Activated CD8-positive, alpha-beta memory T cell treated with anti-CD3 and anti-CD28 coated beads, Interleukin-2, amount 10 ng/mL, durations not matched to agents 7 days and 5 days (primary cell): ENCODE measurements at regions of chr15 and their contacts with region 1.

Region 1: GRCh38 chr15:74768771-74769342 is 13.0 kb upstream of the CSK start:
- DNase-seq: peak; percentile 79
- ATAC-seq: peak; percentile 44
- H3K4me3 Mint-ChIP-seq: no peak overlapping the region
- H3K27ac Mint-ChIP-seq: peak overlapping the region; percentile 6
- H3K4me1 Mint-ChIP-seq: peaks cover 16% of the 10 kb centered on the region
- H3K27me3 Mint-ChIP-seq: peaks cover 2% of the 10 kb centered on the region

Region 2: GRCh38 chr15:74615508-74616365 is 153.1 kb before region 1 on chr15 and contains the start of gene CLK3:
- CTCF ChIA-PET with region 1: interaction called, 35 read pairs
- DNase-seq: peak; percentile 97
- ATAC-seq: peak; percentile 85
- H3K4me3 Mint-ChIP-seq: peak within 1 kb of the TSS; percentile 92
- H3K27ac Mint-ChIP-seq: peak within 1 kb of the TSS; percentile 97
- H3K4me1 Mint-ChIP-seq: peaks cover 38% of the 10 kb centered on the region
- H3K27me3 Mint-ChIP-seq: no peaks in the 10 kb centered on the region
- total RNA-seq, gene CLK3: 120 to 140 TPM

Region 3: DNA sequence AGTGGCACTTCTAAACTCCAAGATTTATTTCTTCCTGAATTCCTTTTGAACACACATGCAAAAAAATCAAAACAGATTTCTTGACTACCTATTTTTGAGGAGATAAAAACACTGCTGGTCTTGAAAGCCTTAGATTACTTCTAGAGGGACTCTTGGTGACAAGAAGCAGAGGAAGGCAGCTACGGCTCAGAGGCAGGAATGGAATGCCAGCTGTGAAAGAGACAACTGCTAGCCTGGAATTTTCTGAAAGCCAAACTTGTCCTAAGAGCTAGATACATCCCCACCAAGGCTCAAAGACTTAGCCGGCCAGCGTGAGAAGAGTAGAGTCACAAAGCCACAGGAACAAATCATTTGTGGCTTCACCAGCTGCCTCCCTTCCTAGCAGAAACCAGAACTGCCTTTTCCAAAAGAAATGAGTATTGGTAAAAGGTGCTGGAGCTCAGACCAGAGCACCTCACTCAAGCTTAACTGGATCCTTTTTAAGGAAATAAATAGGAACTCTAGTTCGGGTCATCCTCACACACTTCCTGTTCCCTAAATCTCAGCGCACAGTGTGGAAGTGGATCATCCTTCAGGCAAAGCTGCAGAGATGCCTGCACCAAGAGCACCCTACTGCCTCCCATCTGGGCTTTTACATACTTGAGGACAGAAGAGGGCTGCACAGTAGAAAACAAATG is 120.6 kb before region 1 on chr15:
- CTCF ChIA-PET with region 1: interaction called, 401 read pairs
- DNase-seq: no peak
- ATAC-seq: no peak
- H3K4me3 Mint-ChIP-seq: no peak overlapping the region
- H3K27ac Mint-ChIP-seq: no peak overlapping the region
- H3K4me1 Mint-ChIP-seq: no peaks in the 10 kb centered on the region
- H3K27me3 Mint-ChIP-seq: no peaks in the 10 kb centered on the region

Region 4: DNA sequence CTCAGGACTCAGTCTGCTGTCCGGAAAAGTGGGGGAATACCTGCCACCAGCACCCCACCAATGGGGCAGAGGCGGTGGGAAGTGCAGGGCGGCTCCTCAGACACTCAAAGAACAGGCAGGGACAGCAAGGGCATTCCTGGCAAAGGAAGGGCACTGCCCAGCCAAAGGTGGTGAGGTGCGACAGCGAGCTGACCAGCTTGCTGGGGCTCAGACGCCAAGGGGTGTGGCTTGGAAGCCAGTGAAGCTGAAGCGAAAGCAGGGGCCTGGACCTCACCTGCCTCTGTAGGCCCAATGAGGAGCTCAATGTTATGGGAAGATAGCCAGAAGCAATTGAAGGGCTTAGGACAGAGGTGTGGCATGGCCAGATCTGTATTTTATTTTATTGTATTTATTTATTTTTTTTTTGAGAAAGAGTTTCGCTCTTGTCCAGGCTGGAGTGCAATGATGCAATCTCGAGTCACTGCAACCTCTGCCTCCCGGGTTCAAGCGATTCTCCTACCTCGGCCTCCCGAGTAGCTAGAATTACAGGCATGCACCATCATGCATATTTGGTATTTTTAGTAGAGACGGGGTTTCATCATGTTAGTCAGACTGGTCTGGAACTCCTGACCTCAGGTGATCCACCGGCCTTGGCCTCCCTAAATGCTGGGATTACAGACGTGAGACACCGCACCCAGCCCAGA is 39.4 kb after region 1 on chr15:
- CTCF ChIA-PET with region 1: interaction called, 54 read pairs
- DNase-seq: no peak
- ATAC-seq: no peak
- H3K4me3 Mint-ChIP-seq: no peak overlapping the region
- H3K27ac Mint-ChIP-seq: no peak overlapping the region
- H3K4me1 Mint-ChIP-seq: peaks cover 18% of the 10 kb centered on the region
- H3K27me3 Mint-ChIP-seq: peaks cover 2% of the 10 kb centered on the region

Region 5: GRCh38 chr15:74842581-74843444 is 74.0 kb after region 1 on chr15 and contains the start of gene ULK3:
- CTCF ChIA-PET with region 1: interaction called, 25 read pairs
- DNase-seq: peak; percentile 95
- ATAC-seq: peak; percentile 87
- H3K4me3 Mint-ChIP-seq: peak within 1 kb of the TSS; percentile 87
- H3K27ac Mint-ChIP-seq: peak within 1 kb of the TSS; percentile 93
- H3K4me1 Mint-ChIP-seq: peaks cover 47% of the 10 kb centered on the region
- H3K27me3 Mint-ChIP-seq: no peaks in the 10 kb centered on the region
- total RNA-seq, gene ULK3: 48.5 to 58.6 TPM

Region 6: DNA sequence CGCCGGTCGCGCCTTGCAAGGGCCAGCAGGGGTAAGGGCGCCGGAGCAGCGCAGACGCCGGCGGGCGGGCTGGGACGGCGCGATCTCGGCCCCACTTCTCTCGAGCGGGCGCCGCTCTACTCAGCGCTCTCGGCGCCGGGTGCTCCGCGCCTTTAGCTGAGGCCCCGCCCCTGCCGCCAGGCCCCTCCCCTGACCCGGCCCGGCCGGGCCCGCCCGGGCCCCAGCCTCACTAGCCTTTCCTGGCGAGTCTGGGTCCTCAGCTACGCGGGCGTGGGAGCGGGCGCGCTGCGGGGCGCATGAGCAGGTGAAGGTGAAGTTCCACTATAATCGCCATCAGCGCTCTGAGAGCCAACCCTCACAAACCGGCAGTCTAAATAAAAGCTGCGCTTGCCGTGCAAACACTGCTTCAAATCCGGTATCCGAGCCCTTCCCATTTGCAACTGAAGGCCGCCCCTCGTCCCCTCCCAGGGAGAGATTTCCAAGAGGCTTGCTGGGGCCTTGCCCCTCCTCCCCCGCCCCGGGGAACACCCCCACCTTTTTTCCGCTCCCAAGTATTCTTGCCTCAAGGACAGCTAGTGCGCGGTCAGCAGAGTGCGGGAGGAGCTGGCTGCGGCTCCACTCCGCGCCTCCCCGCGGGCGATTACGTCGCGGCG is 187.9 kb after region 1 on chr15 and contains the start of gene RPP25:
- CTCF ChIA-PET with region 1: interaction called, 101 read pairs
- DNase-seq: peak; percentile 80
- ATAC-seq: peak; percentile 96
- H3K4me3 Mint-ChIP-seq: peak within 1 kb of the TSS; percentile 69
- H3K27ac Mint-ChIP-seq: no peak within 1 kb of the TSS
- H3K4me1 Mint-ChIP-seq: peaks cover 46% of the 10 kb centered on the region
- H3K27me3 Mint-ChIP-seq: peaks cover 46% of the 10 kb centered on the region
- total RNA-seq, gene RPP25: 6.8 to 7.5 TPM